ENCODE measurements at regions of chr1 and their contacts with region 1.

Region 1: GRCh38 chr1:207579436-207579799 is 65.5 kb upstream of the CR1L start:
- DNase-seq: peak; percentile 36 to 72
- H3K4me3 ChIP-seq: no peak overlapping the region
- H3K27ac ChIP-seq: no peak overlapping the region
- H3K4me1 ChIP-seq: peaks cover 0 to 4% (median 3%) of the 10 kb centered on the region in 4 experiments; a peak in 3 of 7 replicates
- H3K27me3 ChIP-seq: no peaks in the 10 kb centered on the region
- CTCF ChIP-seq: peak; percentile 43 to 86 (median 78)
- EP300 ChIP-seq: no peak
- POLR2A ChIP-seq: no peak
- RAD21 ChIP-seq: peak; percentile 64 to 72

Region 2: GRCh38 chr1:207565546-207566358 is 13.7 kb before region 1 on chr1:
- CTCF ChIA-PET with region 1: interaction called, 11 read pairs
- POLR2A ChIA-PET with region 1: no interaction called
- DNase-seq: peak in 1 of 2 experiments; percentile 61
- H3K4me3 ChIP-seq: no peak overlapping the region
- H3K27ac ChIP-seq: no peak overlapping the region
- H3K4me1 ChIP-seq: no peaks in the 10 kb centered on the region
- H3K27me3 ChIP-seq: no peaks in the 10 kb centered on the region
- CTCF ChIP-seq: peak in 2 of 3 experiments; percentile 49 to 57; a peak in 3 of 4 replicates
- EP300 ChIP-seq: no peak
- POLR2A ChIP-seq: no peak
- RAD21 ChIP-seq: peak; percentile 48 to 57

Measured in H1 (cell line).